ENCODE measurements at regions of chr15 and their contacts with region 1.

Region 1: GRCh38 chr15:65286704-65287519 is at the start of gene PARP16:
- DNase-seq: peak; percentile 82 to 96 (median 92)
- ATAC-seq: peak; percentile 95
- H3K4me3 ChIP-seq: peak within 1 kb of the TSS; percentile 93
- H3K4me3 Mint-ChIP-seq: peak within 1 kb of the TSS; percentile 93
- H3K27ac ChIP-seq: peak within 1 kb of the TSS; percentile 83 to 85
- H3K27ac Mint-ChIP-seq: peak within 1 kb of the TSS; percentile 94
- H3K4me1 ChIP-seq: peaks cover 37% of the 10 kb centered on the region
- H3K4me1 Mint-ChIP-seq: peaks cover 47% of the 10 kb centered on the region
- H3K27me3 ChIP-seq: no peaks in the 10 kb centered on the region
- H3K27me3 Mint-ChIP-seq: no peaks in the 10 kb centered on the region
- CTCF ChIP-seq: peak; percentile 1
- total RNA-seq, gene PARP16: 11.3 to 12.9 TPM

Region 2: GRCh38 chr15:64702816-64703646 is 583.9 kb before region 1 on chr15:
- CTCF ChIA-PET with region 1: no interaction called
- POLR2A ChIA-PET with region 1: no interaction called
- intact Hi-C with region 1: loop called in 1 of 2 experiments (anchors 5 kb)
- DNase-seq: peak; percentile 91 to 98 (median 94)
- ATAC-seq: peak; percentile 96
- H3K4me3 ChIP-seq: peak overlapping the region; percentile 91
- H3K4me3 Mint-ChIP-seq: peak overlapping the region; percentile 85
- H3K27ac ChIP-seq: peak overlapping the region; percentile 60 to 75
- H3K27ac Mint-ChIP-seq: peak overlapping the region; percentile 62
- H3K4me1 ChIP-seq: peaks cover 54% of the 10 kb centered on the region
- H3K4me1 Mint-ChIP-seq: peaks cover 58% of the 10 kb centered on the region
- H3K27me3 ChIP-seq: no peaks in the 10 kb centered on the region
- H3K27me3 Mint-ChIP-seq: no peaks in the 10 kb centered on the region
- CTCF ChIP-seq: no peak

Region 3: DNA sequence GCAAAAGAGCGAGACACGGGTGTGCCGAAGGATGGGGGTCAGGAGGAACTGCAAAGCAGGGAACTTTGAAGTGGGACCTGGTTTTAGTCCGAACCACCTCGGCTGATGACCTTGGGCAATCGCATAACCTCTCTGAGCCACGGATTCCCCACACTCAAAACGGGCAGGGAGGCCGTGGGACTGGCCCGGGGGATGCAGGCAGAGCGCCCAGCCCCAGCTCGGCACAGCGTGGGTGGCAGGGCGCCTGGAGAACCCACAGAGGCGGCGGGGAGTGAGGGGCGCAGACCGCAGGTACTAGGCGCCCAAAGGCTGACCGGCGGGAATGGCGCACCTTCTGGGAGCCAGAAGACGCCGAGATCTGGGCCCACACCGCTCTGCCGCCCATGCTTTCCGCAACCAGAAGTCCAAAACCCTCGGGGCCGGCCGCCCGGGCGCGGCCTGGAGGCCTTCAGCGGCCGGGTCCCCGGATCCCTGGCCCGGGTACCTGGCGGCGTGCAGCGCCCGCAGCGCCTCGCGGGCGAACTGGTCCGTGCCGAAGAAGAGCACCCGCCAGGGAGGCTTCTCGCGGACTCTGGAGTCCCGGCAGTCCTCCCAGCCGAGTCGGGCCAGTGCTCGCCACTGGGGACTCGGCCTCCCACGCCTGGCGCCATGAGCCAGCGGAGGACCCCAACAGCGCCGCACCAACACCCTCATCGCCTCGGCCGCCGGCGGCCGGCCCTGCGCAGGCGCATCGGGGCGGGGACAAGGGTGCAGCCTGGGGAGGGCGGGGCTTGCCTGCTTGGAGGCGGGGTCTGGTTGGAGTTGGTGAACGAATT is 257.8 kb before region 1 on chr15 and contains the start of gene MTFMT:
- CTCF ChIA-PET with region 1: no interaction called
- POLR2A ChIA-PET with region 1: no interaction called
- intact Hi-C with region 1: loop called in 1 of 2 experiments (anchors 5 kb)
- DNase-seq: peak; percentile 86 to 98 (median 92)
- ATAC-seq: peak; percentile 94
- H3K4me3 ChIP-seq: peak within 1 kb of the TSS; percentile 72
- H3K4me3 Mint-ChIP-seq: peak within 1 kb of the TSS; percentile 98
- H3K27ac ChIP-seq: peak within 1 kb of the TSS; percentile 29 to 37
- H3K27ac Mint-ChIP-seq: peak within 1 kb of the TSS; percentile 66
- H3K4me1 ChIP-seq: peaks cover 25% of the 10 kb centered on the region
- H3K4me1 Mint-ChIP-seq: peaks cover 25% of the 10 kb centered on the region
- H3K27me3 ChIP-seq: peaks cover 0 to 6% of the 10 kb centered on the region in 2 experiments
- H3K27me3 Mint-ChIP-seq: peaks cover 15% of the 10 kb centered on the region
- CTCF ChIP-seq: no peak
- total RNA-seq, gene MTFMT: 3.4 to 5.8 TPM

Region 4: DNA sequence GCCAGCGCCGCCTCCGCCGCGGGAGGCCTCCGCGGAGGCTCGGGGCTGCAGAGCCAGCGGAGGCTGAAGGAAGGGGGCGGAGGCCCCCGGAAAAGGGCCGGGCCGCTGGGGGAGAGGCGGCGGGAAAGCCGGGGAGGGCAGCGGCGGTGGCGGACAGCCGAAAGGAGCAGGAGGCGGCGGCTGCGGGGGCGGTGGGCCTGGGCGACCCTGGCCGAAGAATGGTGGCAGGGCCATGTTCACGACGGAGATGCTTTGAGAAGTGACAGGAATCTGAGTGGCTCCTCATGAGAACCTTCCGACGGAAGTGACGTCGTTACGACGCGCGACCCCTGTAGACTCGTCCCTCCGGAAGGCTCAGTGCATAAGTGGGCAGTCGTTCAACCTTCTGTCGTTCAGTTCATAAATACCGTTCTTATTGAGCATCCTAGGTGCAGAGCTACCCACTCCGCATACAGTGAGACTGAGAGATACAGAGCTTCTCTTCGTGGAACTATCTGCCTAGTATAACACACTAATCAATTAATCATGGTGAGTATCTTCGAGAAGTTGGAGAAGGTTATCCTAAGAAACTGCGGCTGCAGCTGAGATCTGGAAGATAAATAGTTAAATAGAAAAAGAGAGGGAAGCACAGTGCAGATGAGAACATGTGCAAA is 153.2 kb before region 1 on chr15 and contains the start of gene PDCD7:
- CTCF ChIA-PET with region 1: interaction called, 3 read pairs
- POLR2A ChIA-PET with region 1: interaction called, 3 read pairs
- intact Hi-C with region 1: loop called in 1 of 2 experiments (anchors 5 kb)
- DNase-seq: peak; percentile 68 to 95 (median 78)
- ATAC-seq: peak; percentile 95
- H3K4me3 ChIP-seq: peak within 1 kb of the TSS; percentile 66
- H3K4me3 Mint-ChIP-seq: peak within 1 kb of the TSS; percentile 95
- H3K27ac ChIP-seq: peak within 1 kb of the TSS; percentile 73 to 87
- H3K27ac Mint-ChIP-seq: peak within 1 kb of the TSS; percentile 92
- H3K4me1 ChIP-seq: peaks cover 26% of the 10 kb centered on the region
- H3K4me1 Mint-ChIP-seq: peaks cover 32% of the 10 kb centered on the region
- H3K27me3 ChIP-seq: no peaks in the 10 kb centered on the region
- H3K27me3 Mint-ChIP-seq: no peaks in the 10 kb centered on the region
- CTCF ChIP-seq: no peak
- total RNA-seq, gene PDCD7: 15.6 to 17.7 TPM

Region 5: DNA sequence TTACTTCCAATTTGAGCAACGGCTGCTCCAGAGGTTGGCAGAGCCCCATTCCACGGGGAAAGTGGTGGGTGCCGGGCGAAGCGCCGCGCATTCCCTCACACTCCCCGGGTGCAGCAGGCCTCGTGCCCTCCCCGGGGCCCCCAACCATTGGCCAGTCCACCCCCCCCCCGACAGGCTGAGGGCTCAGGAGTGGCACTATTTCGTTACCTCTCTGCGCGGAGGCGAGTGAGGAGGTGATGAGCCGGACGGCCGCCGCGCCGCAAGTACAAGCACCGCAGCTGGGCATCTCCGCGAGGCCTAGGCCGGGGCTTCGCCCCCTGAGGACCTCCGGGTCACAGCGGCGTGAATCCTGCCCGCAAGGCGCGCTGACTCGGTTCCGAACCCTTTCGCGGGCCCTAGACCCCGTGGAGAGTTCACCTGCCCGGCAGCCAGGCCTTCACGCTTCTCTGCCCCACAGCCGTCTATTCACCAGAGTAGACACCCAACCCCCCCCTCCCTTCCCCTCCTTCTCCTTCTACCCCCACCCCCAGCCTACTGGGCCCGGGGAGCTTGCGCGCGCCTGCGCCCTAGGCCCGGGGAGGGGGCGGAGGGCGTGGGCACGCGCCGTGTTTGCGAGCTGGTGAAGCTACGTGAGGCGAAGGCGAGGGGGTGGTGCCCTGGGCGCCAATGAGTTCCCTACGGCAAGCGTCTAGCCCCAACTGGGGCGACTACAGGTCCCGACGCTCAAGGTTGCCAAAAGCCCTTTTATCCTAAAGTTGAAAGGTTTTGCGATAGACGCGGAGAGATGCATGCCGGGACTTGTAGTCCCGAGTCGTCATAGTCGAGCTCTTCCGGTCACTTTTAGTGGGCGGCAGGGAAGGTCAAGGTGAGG is 101.8 kb before region 1 on chr15 and contains the start of gene CLPX:
- CTCF ChIA-PET with region 1: no interaction called
- POLR2A ChIA-PET with region 1: interaction called, 46 read pairs
- intact Hi-C with region 1: loop called in 1 of 2 experiments (anchors 5 kb)
- DNase-seq: peak; percentile 84 to 99 (median 90)
- ATAC-seq: peak; percentile 97
- H3K4me3 ChIP-seq: peak within 1 kb of the TSS; percentile 91
- H3K4me3 Mint-ChIP-seq: peak within 1 kb of the TSS; percentile 94
- H3K27ac ChIP-seq: peak within 1 kb of the TSS; percentile 82 to 86
- H3K27ac Mint-ChIP-seq: peak within 1 kb of the TSS; percentile 85
- H3K4me1 ChIP-seq: peaks cover 29% of the 10 kb centered on the region
- H3K4me1 Mint-ChIP-seq: peaks cover 33% of the 10 kb centered on the region
- H3K27me3 ChIP-seq: no peaks in the 10 kb centered on the region
- H3K27me3 Mint-ChIP-seq: no peaks in the 10 kb centered on the region
- CTCF ChIP-seq: no peak
- total RNA-seq, gene CLPX: 29.1 to 36.3 TPM

Region 6: DNA sequence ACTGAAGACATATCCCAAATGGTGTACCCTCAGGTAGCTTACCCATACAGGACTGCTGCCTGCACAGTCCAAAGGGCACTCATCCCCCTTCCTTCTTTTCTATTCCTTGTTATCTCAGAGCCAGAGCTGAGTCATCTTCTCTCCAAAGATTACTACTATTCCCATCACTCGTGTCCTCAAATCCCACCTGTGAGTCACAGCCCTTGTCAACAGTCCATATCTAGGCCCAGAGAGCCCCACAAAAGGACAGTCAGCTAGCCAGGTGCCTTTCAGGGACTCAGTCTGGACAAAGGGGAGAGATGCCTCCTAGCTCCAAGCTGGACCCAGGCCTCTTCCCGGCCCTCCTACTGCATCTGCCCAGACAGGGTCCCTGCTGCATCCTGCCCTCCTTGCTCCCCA is 11.2 kb before region 1 on chr15:
- CTCF ChIA-PET with region 1: interaction called, 11 read pairs
- POLR2A ChIA-PET with region 1: interaction called, 25 read pairs
- intact Hi-C with region 1: no loop called
- DNase-seq: no peak
- ATAC-seq: no peak
- H3K4me3 ChIP-seq: no peak overlapping the region
- H3K4me3 Mint-ChIP-seq: no peak overlapping the region
- H3K27ac ChIP-seq: peak overlapping the region in 1 of 2 donors; percentile 48
- H3K27ac Mint-ChIP-seq: peak overlapping the region; percentile 77
- H3K4me1 ChIP-seq: peaks cover 22% of the 10 kb centered on the region
- H3K4me1 Mint-ChIP-seq: peaks cover 52% of the 10 kb centered on the region
- H3K27me3 ChIP-seq: no peaks in the 10 kb centered on the region
- H3K27me3 Mint-ChIP-seq: no peaks in the 10 kb centered on the region
- CTCF ChIP-seq: no peak

Region 7: GRCh38 chr15:65298731-65299130 is 11.8 kb after region 1 on chr15:
- CTCF ChIA-PET with region 1: interaction called, 26 read pairs
- POLR2A ChIA-PET with region 1: interaction called, 136 read pairs
- intact Hi-C with region 1: loop called (anchors 1 kb)
- DNase-seq: no peak
- ATAC-seq: no peak
- H3K4me3 ChIP-seq: peak overlapping the region; percentile 54
- H3K4me3 Mint-ChIP-seq: peak overlapping the region; percentile 92
- H3K27ac ChIP-seq: peak overlapping the region in 1 of 2 donors; percentile 43
- H3K27ac Mint-ChIP-seq: peak overlapping the region; percentile 91
- H3K4me1 ChIP-seq: peaks cover 39% of the 10 kb centered on the region
- H3K4me1 Mint-ChIP-seq: peaks cover 55% of the 10 kb centered on the region
- H3K27me3 ChIP-seq: no peaks in the 10 kb centered on the region
- H3K27me3 Mint-ChIP-seq: peaks cover 5% of the 10 kb centered on the region
- CTCF ChIP-seq: no peak

Measured in CD4-positive, alpha-beta T cell (primary cell).